ENCODE measurements at regions of chr11 and their contacts with region 1.

Region 1: DNA sequence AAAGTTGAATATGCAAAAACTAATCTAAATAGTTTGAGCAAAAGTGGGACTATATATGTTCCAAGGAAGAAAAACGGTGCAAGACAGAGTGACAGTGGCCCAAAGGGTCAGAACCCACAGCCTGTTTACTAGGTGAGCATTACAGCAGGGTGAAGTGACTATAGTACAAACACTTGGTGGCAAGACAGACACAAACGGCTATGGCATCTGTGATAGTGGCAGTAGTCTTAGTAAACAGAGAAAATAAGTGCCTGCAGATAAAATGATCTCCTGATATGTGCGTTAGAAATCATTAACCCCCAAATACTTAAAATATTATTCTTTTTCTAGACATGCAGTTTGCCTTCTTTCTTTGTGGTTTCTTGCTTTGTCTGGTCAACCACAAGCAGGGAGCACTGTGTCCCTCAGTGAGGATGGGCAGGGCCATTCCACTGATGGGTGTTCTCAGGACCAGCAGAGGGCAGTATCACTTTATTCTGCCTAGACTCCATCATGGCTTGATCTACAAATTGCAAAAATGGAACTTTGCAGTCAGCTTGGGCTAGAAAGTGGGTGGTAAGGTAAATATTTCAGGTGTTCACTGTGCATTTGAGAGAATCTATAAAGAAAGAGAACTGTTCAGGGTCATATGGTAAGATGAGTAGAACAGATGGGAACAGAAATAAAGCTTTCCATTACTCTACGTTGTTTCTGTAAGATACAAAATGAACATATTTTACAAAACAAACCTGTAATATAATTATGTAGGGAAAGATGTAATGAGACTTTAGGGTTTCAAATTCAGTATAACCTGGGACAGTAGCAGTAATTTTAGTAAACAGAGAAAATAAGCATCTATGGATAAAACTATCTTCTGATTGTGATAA is 198.2 kb downstream of the SWAP70 start:
- DNase-seq: peak; percentile 67
- ATAC-seq: peak; percentile 82
- H3K4me3 ChIP-seq: no peak overlapping the region
- H3K4me3 Mint-ChIP-seq: no peak overlapping the region
- H3K27ac ChIP-seq: no peak overlapping the region
- H3K27ac Mint-ChIP-seq: no peak overlapping the region
- H3K4me1 ChIP-seq: peaks cover 14 to 18% of the 10 kb centered on the region in 2 donors
- H3K4me1 Mint-ChIP-seq: peaks cover 28% of the 10 kb centered on the region
- H3K27me3 ChIP-seq: no peaks in the 10 kb centered on the region
- H3K27me3 Mint-ChIP-seq: no peaks in the 10 kb centered on the region
- CTCF ChIP-seq: peak; percentile 84

Region 2: GRCh38 chr11:9875862-9876261 is 13.8 kb after region 1 on chr11:
- CTCF ChIA-PET with region 1: interaction called, 13 read pairs
- POLR2A ChIA-PET with region 1: no interaction called
- intact Hi-C with region 1: no loop called
- DNase-seq: no peak
- ATAC-seq: no peak
- H3K4me3 ChIP-seq: no peak overlapping the region
- H3K4me3 Mint-ChIP-seq: no peak overlapping the region
- H3K27ac ChIP-seq: no peak overlapping the region
- H3K27ac Mint-ChIP-seq: no peak overlapping the region
- H3K4me1 ChIP-seq: no peaks in the 10 kb centered on the region
- H3K4me1 Mint-ChIP-seq: peaks cover 3% of the 10 kb centered on the region
- H3K27me3 ChIP-seq: no peaks in the 10 kb centered on the region
- H3K27me3 Mint-ChIP-seq: no peaks in the 10 kb centered on the region
- CTCF ChIP-seq: no peak

Region 3: DNA sequence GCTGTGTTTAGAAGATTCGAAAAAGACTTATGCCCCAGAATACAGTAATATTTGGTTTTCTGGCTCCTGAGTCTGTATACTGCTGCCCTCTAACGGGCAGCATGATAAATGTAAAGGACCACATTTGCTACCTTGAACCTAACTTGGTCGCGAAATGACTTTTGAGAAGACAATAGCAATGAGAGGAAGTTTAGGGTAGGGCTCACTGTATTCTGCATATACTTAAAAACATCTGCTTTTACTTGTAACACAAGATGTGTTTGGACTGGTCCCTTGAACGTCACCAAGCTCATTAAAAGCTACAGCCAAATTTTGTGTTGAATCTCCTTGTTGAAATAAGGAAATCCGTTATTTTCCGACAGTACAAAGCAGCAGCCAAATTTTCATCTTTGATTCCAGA is 110.9 kb after region 1 on chr11:
- CTCF ChIA-PET with region 1: interaction called, 26 read pairs
- POLR2A ChIA-PET with region 1: interaction called, 7 read pairs
- intact Hi-C with region 1: loop called (anchors 1 kb)
- DNase-seq: peak; percentile 70
- ATAC-seq: peak; percentile 76
- H3K4me3 ChIP-seq: no peak overlapping the region
- H3K4me3 Mint-ChIP-seq: no peak overlapping the region
- H3K27ac ChIP-seq: no peak overlapping the region
- H3K27ac Mint-ChIP-seq: no peak overlapping the region
- H3K4me1 ChIP-seq: peaks cover 0 to 3% of the 10 kb centered on the region in 2 donors
- H3K4me1 Mint-ChIP-seq: peaks cover 4% of the 10 kb centered on the region
- H3K27me3 ChIP-seq: no peaks in the 10 kb centered on the region
- H3K27me3 Mint-ChIP-seq: no peaks in the 10 kb centered on the region
- CTCF ChIP-seq: peak; percentile 88

Region 4: DNA sequence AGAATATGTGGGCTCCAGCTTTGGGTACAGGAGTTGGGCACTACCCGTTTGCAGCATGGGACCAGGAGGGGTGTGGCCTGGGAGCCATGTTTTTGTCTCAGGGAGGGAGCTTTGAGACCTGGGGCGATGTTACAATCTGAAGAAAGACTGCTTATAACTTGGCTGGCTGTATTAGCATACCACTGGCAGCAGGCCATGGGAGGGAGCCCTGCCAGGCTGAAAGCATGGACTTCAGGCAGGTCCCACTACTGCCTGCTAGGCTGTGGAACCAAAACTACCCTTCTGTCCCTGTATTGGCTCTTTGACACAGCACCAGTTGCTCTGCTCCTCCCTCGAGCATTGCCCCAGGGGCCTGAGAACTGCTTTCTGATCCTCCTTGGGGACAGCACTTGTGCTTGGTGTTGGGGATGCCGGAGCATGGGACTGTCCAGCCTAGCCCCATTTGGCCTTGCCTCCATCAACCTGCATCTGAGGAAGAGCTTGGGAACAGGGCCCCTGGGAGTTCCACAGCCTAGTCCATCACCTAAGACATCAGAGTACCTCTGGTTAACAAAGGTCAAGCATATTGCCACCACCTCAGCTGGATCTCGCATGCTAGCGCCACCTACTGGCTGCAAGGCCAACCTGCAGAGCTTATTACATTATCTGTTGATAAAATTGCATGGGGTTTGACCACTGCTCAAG is 214.5 kb after region 1 on chr11:
- CTCF ChIA-PET with region 1: interaction called, 13 read pairs
- POLR2A ChIA-PET with region 1: interaction called, 8 read pairs
- intact Hi-C with region 1: loop called (anchors 5 kb)
- DNase-seq: peak; percentile 62
- ATAC-seq: peak; percentile 49
- H3K4me3 ChIP-seq: no peak overlapping the region
- H3K4me3 Mint-ChIP-seq: no peak overlapping the region
- H3K27ac ChIP-seq: no peak overlapping the region
- H3K27ac Mint-ChIP-seq: no peak overlapping the region
- H3K4me1 ChIP-seq: no peaks in the 10 kb centered on the region
- H3K4me1 Mint-ChIP-seq: no peaks in the 10 kb centered on the region
- H3K27me3 ChIP-seq: no peaks in the 10 kb centered on the region
- H3K27me3 Mint-ChIP-seq: no peaks in the 10 kb centered on the region
- CTCF ChIP-seq: peak; percentile 81

Region 5: DNA sequence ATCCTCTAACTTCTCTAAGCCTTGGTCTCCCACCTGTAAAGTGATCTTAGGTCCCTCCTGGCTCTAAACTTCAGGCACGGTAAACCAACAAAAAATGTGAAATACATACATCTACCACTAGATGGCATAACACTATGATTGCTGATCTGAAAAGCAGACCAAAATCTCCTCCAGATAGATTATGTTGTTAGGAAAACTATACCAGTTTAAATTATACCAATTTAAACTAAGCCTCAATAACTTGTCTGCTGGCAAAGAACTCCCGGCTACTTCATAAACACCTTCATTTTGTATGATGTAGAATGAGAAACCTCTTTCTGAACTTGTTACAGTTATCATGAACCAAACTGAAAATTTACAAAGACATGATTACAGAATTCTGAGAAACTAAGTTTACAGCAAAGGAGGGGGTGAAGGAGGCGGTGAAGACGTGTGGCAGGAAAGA is 346.1 kb after region 1 on chr11:
- CTCF ChIA-PET with region 1: no interaction called
- POLR2A ChIA-PET with region 1: no interaction called
- intact Hi-C with region 1: loop called (anchors 5 kb)
- DNase-seq: peak; percentile 71
- ATAC-seq: peak; percentile 62
- H3K4me3 ChIP-seq: no peak overlapping the region
- H3K4me3 Mint-ChIP-seq: no peak overlapping the region
- H3K27ac ChIP-seq: no peak overlapping the region
- H3K27ac Mint-ChIP-seq: no peak overlapping the region
- H3K4me1 ChIP-seq: no peaks in the 10 kb centered on the region
- H3K4me1 Mint-ChIP-seq: peaks cover 5% of the 10 kb centered on the region
- H3K27me3 ChIP-seq: no peaks in the 10 kb centered on the region
- H3K27me3 Mint-ChIP-seq: no peaks in the 10 kb centered on the region
- CTCF ChIP-seq: peak; percentile 87

Region 6: DNA sequence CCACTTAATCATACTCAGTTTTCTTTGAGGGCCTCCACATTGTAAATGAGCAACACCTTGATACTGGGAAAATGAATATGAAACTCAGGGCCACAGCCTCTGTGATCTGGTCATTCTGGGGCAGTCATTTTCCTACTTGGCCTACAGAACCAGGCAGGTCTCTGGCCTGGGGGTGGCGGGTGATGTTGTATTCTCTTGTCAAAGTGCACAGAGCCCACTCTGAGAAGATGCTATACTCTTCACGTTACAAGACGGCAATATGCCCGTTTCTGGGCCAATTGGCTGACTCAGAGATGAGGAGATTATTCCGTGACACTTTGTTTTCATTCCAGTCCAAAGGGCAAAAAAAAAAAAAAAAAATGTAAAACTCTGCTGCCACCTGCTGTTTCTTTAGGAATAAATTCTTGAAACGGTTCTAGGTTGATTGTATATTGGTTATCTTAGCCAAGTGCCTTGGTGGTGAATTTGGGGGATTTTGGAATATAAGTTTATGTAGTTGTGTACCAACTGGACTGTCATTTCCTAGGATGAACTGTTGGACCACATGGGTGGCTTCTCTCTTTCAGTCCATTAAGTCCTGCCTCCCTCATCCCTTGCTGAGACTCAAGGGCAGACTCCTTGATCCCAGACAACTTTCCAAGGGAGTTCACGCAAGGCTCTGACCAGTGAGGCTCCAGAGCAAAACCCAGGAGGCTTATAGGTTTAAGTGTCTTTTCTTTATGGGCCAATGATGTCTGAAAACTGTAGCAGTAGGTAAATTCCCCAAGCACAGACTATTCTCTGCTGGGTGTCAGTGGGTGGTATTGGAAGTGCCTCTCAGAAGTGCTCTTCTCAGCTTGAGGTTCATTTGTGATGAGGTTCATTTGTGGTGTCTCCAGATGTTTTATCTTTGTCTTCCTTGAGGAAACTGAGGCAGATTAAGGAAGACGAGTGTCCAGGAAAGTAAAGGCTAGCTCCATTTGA is 461.0 kb after region 1 on chr11:
- CTCF ChIA-PET with region 1: interaction called, 9 read pairs
- POLR2A ChIA-PET with region 1: no interaction called
- intact Hi-C with region 1: loop called (anchors 2 kb)
- DNase-seq: peak; percentile 70
- ATAC-seq: peak; percentile 44
- H3K4me3 ChIP-seq: no peak overlapping the region
- H3K4me3 Mint-ChIP-seq: no peak overlapping the region
- H3K27ac ChIP-seq: no peak overlapping the region
- H3K27ac Mint-ChIP-seq: peak overlapping the region; percentile 67
- H3K4me1 ChIP-seq: peaks cover 7 to 14% of the 10 kb centered on the region in 2 donors
- H3K4me1 Mint-ChIP-seq: peaks cover 17% of the 10 kb centered on the region
- H3K27me3 ChIP-seq: peaks cover 0 to 6% (median 0%) of the 10 kb centered on the region in 4 experiments
- H3K27me3 Mint-ChIP-seq: peaks cover 16% of the 10 kb centered on the region
- CTCF ChIP-seq: peak; percentile 76

Measured in B cell (primary cell).